H1 (cell line): ENCODE measurements at regions of chr14 and their contacts with region 1.

Region 1: DNA sequence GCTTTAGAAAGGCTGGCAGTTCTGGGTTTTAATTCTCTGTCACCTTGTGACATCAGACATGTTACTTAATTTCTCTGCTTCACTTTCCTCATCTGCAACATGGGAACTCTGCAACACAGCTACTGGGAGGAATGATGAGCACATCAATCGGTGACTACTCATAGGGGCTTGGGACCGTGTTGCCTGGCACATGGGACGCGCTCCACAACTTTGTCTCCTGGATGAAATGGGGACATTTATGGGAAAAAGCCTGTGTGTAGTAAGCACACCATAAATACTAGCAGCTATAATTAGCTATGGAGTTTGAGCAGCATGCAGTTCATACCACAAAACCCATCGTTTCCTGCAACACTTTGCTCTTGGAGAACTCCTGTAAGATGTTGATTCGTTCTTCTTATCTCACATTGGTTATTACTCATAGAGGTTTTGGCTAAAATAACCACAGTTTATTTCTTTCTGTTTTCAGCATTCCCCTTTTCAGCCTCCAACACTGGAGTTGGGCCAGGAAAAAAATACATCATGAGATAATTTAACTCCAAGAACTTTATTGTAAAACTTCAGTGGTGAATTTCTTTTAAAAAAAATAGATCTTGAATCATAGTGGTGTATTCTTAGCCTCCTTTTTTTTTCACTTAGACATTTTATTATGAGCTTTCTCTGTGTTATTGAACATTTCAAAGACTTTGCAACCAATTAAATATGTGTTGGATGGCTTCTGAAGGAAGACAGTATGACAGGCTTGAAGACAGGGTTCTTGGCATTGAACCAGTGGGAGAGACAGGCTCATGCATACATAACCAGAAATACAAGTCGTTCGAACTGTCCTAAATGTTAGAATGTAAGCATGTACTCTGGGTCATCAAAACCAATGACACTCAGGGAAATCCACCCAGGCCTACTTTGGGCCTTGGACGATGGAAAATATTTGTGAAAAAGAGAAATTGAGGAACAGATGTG is 72.7 kb downstream of the RIN3 start:
- DNase-seq: no peak
- H3K4me3 ChIP-seq: no peak overlapping the region
- H3K27ac ChIP-seq: no peak overlapping the region
- H3K4me1 ChIP-seq: no peaks in the 10 kb centered on the region; a peak in 1 of 7 replicates
- H3K27me3 ChIP-seq: no peaks in the 10 kb centered on the region
- CTCF ChIP-seq: no peak
- EP300 ChIP-seq: no peak
- POLR2A ChIP-seq: no peak
- RAD21 ChIP-seq: no peak

Region 2: GRCh38 chr14:91805659-91806058 is 780.6 kb before region 1 on chr14:
- CTCF ChIA-PET with region 1: no interaction called
- POLR2A ChIA-PET with region 1: no interaction called
- DNase-seq: no peak
- H3K4me3 ChIP-seq: no peak overlapping the region
- H3K27ac ChIP-seq: no peak overlapping the region
- H3K4me1 ChIP-seq: no peaks in the 10 kb centered on the region
- H3K27me3 ChIP-seq: no peaks in the 10 kb centered on the region
- CTCF ChIP-seq: no peak
- EP300 ChIP-seq: no peak
- POLR2A ChIP-seq: no peak
- RAD21 ChIP-seq: no peak

Region 3: DNA sequence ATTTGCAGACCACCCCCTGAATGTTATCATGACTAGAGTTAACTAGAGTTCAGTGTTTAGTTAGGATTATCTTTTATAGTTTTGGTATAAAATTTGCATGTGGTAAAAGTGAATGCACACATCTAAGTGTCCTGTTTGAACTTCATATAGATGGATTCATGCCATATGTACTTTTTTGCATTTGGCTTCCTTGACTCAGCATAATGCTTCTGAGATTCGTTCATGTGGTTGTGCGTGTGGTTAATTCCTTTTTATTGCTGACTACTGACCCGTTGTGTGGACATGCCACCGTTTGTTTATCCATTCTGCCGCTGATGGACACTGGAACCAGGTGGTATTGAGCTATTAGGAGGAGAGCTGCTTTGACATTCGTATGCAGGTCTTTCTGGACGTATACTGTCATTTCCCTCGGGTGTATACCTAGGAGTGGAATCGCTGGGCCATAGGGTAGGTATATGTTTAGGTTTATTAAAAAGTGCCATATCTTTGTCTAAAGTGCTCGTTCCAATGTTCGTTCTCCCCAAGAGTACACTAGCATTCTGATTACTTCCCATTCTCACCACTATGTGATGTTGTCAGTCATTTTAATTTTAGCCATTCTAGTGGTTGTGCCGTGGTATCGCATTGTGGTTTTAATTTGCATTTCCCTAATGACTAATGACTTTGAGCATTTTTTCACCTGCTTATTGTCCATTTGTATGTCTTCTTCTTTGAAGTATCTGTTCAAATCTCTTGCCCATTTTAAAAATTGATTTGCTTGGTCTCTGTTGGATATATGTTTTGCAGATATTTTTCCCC is 35.0 kb before region 1 on chr14:
- CTCF ChIA-PET with region 1: no interaction called
- POLR2A ChIA-PET with region 1: no interaction called
- DNase-seq: no peak
- H3K4me3 ChIP-seq: no peak overlapping the region
- H3K27ac ChIP-seq: no peak overlapping the region
- H3K4me1 ChIP-seq: no peaks in the 10 kb centered on the region; a peak in 1 of 7 replicates
- H3K27me3 ChIP-seq: no peaks in the 10 kb centered on the region
- CTCF ChIP-seq: no peak
- EP300 ChIP-seq: no peak
- POLR2A ChIP-seq: no peak
- RAD21 ChIP-seq: no peak

Region 4: GRCh38 chr14:92596331-92596911 is 10.2 kb after region 1 on chr14:
- CTCF ChIA-PET with region 1: interaction called, 10 read pairs
- POLR2A ChIA-PET with region 1: no interaction called
- DNase-seq: no peak
- H3K4me3 ChIP-seq: no peak overlapping the region
- H3K27ac ChIP-seq: no peak overlapping the region
- H3K4me1 ChIP-seq: no peaks in the 10 kb centered on the region
- H3K27me3 ChIP-seq: no peaks in the 10 kb centered on the region; a peak in 1 of 7 replicates
- CTCF ChIP-seq: peak; percentile 56 to 68 (median 56)
- EP300 ChIP-seq: no peak
- POLR2A ChIP-seq: no peak
- RAD21 ChIP-seq: peak; percentile 59 to 71